MCF 10A (cell line): ENCODE measurements at regions of chr11 and their contacts with region 1.

Region 1: DNA sequence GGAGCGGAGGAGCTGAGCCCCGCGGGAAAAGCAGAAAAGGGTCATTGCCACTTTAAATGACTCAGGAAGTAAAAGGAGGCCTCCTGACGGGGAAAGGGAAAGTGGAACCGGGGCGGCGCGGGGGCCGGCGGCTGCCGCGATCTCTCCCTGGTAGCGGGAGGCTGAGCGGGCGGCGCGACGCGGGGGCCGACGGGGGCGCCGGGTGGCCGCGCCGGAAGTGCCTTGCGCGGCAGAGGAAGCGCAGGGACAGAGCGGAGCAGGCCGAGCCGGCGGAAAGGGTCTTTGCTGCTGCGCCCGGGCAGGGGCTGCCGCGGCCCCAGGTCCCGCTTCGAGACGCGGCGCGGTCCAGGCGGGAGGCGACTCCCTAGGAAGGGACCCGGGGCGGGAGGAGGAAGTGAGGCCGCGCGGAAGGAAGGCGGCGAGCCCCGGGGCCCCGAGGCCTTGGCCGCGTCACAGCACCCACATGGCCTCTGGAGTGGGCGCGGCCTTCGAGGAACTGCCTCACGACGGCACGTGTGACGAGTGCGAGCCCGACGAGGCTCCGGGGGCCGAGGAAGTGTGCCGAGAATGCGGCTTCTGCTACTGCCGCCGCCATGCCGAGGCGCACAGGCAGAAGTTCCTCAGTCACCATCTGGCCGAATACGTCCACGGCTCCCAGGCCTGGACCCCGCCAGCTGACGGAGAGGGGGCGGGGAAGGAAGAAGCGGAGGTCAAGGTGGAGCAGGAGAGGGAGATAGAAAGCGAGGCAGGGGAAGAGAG is at the start of gene TRIM44:
- DNase-seq: peak; percentile 84
- H3K4me3 Mint-ChIP-seq: peak within 1 kb of the TSS; percentile 100
- H3K27ac Mint-ChIP-seq: peak within 1 kb of the TSS; percentile 100
- H3K4me1 Mint-ChIP-seq: peaks cover 25% of the 10 kb centered on the region
- H3K27me3 Mint-ChIP-seq: no peaks in the 10 kb centered on the region
- CTCF ChIP-seq: no peak
- total RNA-seq, gene TRIM44: 98.5 and 103 TPM in 2 replicates

Region 2: DNA sequence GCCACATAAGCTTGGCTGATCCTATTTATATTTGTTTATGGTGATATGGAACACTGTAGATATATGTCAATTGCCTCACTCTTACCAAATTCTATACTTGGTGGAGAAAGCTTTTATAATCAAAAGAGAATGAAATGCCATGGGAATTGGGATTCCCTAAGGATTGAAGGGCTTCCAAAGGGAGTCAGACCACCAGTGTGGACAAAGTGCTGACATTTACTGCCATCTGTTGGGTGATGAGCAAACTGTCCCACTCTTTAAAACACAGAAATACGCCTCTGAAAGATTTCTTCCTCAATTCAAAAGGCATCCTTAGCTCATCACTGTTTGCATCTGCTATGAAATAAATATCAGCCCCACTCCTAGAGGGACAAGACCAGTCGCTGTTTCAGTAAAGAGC is 250.5 kb before region 1 on chr11:
- CTCF ChIA-PET with region 1: no interaction called
- POLR2A ChIA-PET with region 1: no interaction called
- intact Hi-C with region 1: no loop called
- DNase-seq: peak; percentile 17
- H3K4me3 Mint-ChIP-seq: no peak overlapping the region
- H3K27ac Mint-ChIP-seq: no peak overlapping the region
- H3K4me1 Mint-ChIP-seq: no peaks in the 10 kb centered on the region
- H3K27me3 Mint-ChIP-seq: peaks cover 61% of the 10 kb centered on the region
- CTCF ChIP-seq: peak; percentile 21

Region 3: GRCh38 chr11:35623621-35624168 is 39.1 kb before region 1 on chr11:
- CTCF ChIA-PET with region 1: interaction called, 3 read pairs
- POLR2A ChIA-PET with region 1: interaction called, 69 read pairs
- intact Hi-C with region 1: loop called (anchors 1 kb)
- DNase-seq: peak; percentile 84
- H3K4me3 Mint-ChIP-seq: no peak overlapping the region
- H3K27ac Mint-ChIP-seq: peak overlapping the region; percentile 65
- H3K4me1 Mint-ChIP-seq: peaks cover 39% of the 10 kb centered on the region
- H3K27me3 Mint-ChIP-seq: no peaks in the 10 kb centered on the region
- CTCF ChIP-seq: no peak

Region 4: DNA sequence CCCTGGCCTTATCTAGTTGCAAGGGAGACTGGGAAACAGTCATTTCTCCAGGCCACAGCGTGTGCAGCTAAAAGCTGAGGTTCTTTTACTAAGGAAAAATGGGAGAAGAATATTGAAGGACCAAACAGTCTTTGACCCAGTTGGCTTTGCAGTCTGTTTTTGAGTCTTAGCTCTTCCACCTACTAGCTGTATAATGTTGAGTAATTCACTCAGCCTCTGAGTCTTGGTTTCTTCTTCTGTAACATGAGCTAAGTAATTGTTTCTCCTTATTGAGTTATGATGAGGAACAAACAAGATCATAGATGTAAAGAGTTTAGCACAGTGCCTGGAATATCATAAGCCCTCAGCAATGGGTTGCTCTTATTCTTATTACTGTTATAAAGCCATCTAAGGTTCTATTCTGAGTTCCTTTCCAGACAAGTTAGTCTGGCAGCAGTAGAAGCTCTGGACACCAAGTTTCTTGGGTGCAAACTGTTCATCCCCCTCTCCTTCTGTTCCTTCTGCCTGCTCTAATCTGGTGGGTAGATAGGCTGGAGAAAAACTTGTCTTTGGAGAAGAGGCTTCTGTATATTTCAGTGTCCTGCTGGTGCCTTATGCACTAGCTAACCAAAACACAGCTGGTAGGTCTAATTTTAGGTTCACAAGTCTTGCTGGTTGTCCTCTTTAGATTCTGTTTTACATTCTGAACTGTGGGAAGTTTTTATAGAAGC is 13.2 kb after region 1 on chr11:
- CTCF ChIA-PET with region 1: no interaction called
- POLR2A ChIA-PET with region 1: interaction called, 14 read pairs
- intact Hi-C with region 1: no loop called
- DNase-seq: no peak
- H3K4me3 Mint-ChIP-seq: no peak overlapping the region
- H3K27ac Mint-ChIP-seq: no peak overlapping the region
- H3K4me1 Mint-ChIP-seq: peaks cover 59% of the 10 kb centered on the region
- H3K27me3 Mint-ChIP-seq: no peaks in the 10 kb centered on the region
- CTCF ChIP-seq: no peak

Region 5: DNA sequence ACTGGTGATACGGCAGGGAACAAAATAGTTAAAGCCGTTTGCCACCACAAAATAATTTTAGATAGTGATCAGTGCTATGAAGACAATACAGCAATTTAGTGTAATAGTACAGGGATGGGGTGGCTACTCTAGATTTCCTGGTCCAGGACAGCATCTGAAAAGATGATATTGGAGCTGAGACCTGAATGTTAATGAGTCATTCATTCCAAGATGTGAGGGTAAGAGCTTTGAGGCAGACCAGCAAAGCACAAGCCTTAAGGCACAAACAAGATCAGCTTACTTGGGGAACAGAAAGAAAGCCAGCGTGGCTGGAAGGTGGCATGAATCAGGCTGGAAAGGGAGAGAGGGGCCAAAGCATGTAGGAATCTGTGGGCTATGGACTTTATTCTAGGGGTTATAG is 132.0 kb after region 1 on chr11:
- CTCF ChIA-PET with region 1: interaction called, 5 read pairs
- POLR2A ChIA-PET with region 1: no interaction called
- intact Hi-C with region 1: loop called (anchors 5 kb)
- DNase-seq: peak; percentile 61
- H3K4me3 Mint-ChIP-seq: no peak overlapping the region
- H3K27ac Mint-ChIP-seq: peak overlapping the region; percentile 81
- H3K4me1 Mint-ChIP-seq: peaks cover 64% of the 10 kb centered on the region
- H3K27me3 Mint-ChIP-seq: no peaks in the 10 kb centered on the region
- CTCF ChIP-seq: no peak

Region 6: GRCh38 chr11:35887737-35888136 is 224.9 kb after region 1 on chr11:
- CTCF ChIA-PET with region 1: no interaction called
- POLR2A ChIA-PET with region 1: no interaction called
- intact Hi-C with region 1: no loop called
- DNase-seq: no peak
- H3K4me3 Mint-ChIP-seq: no peak overlapping the region
- H3K27ac Mint-ChIP-seq: no peak overlapping the region
- H3K4me1 Mint-ChIP-seq: peaks cover 13% of the 10 kb centered on the region
- H3K27me3 Mint-ChIP-seq: no peaks in the 10 kb centered on the region
- CTCF ChIP-seq: no peak